Activated B cell treated with CpG ODN at 0.5 μM for 24 hours (primary cell): ENCODE measurements at regions of chr12 and their contacts with region 1.

Region 1: GRCh38 chr12:89671469-89671868 is 37.2 kb downstream of the ATP2B1 start:
- DNase-seq: no peak
- ATAC-seq: no peak
- H3K4me3 Mint-ChIP-seq: no peak overlapping the region
- H3K27ac Mint-ChIP-seq: peak overlapping the region; percentile 42
- H3K4me1 Mint-ChIP-seq: peaks cover 94% of the 10 kb centered on the region
- H3K27me3 Mint-ChIP-seq: no peaks in the 10 kb centered on the region
- CTCF ChIP-seq: no peak

Region 2: DNA sequence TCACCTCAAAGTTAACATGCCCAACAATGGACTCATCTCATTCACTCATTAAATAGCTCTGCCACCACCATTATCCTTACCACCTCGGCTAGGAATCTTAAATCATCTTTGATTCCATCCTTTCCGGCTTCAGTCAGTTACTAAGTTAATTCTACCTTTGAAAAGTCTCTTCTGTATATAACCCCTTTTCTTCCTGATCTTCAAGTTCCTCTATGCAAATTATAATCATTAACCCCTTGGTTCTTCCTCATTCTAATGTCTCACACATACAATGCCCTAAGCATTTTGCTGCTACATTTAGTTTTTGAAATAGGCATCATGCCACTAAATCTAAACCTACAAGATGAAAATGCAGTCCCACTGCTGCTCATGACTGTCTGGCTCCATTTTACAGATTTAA is 14.4 kb before region 1 on chr12:
- CTCF ChIA-PET with region 1: no interaction called
- POLR2A ChIA-PET with region 1: no interaction called
- intact Hi-C with region 1: loop called (anchors 1 kb)
- DNase-seq: no peak
- ATAC-seq: peak; percentile 70
- H3K4me3 Mint-ChIP-seq: peak overlapping the region; percentile 68
- H3K27ac Mint-ChIP-seq: peak overlapping the region; percentile 68
- H3K4me1 Mint-ChIP-seq: peaks cover 63% of the 10 kb centered on the region
- H3K27me3 Mint-ChIP-seq: no peaks in the 10 kb centered on the region
- CTCF ChIP-seq: no peak

Region 3: GRCh38 chr12:89685363-89685972 is 14.0 kb after region 1 on chr12:
- CTCF ChIA-PET with region 1: no interaction called
- POLR2A ChIA-PET with region 1: interaction called, 4 read pairs
- intact Hi-C with region 1: loop called (anchors 2 kb)
- DNase-seq: no peak
- ATAC-seq: peak; percentile 45
- H3K4me3 Mint-ChIP-seq: no peak overlapping the region
- H3K27ac Mint-ChIP-seq: peak overlapping the region; percentile 1
- H3K4me1 Mint-ChIP-seq: peaks cover 75% of the 10 kb centered on the region
- H3K27me3 Mint-ChIP-seq: no peaks in the 10 kb centered on the region
- CTCF ChIP-seq: no peak